Mammary epithelial cell (primary cell): ENCODE measurements at regions of chr6 and their contacts with region 1.

Region 1: DNA sequence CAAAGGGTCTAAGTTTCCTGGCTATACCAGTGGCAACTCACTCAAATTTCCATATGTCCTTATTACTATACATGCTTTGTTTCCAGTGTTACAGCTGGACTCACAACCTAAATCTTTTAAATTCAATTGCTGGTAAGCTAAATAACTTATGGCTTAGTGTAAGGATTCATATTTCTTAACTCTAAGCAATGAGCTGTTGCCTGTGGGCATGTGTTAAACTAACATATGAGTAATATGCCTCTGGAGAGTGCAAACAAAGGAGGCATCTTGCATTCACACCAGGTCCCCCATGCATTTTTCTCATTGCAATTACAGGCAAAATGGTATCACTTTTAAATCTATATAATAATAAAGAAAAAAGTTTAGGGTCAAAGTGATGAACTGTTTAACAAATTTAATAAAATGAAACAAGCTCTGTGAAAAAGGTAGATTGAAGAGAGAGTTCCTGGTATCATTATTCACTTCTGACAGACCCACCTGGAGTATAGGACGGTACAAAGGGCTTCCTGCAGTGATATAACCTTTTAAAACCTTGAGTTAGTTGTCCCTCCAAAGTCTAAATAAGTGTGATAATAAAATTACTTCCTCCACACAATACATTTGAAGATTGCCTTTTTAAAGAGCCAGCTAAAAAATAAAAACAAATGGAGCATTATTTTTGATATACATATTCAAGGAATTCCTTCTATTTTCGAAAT is 57.6 kb upstream of the HMGCLL1 start:
- DNase-seq: peak; percentile 75
- H3K4me3 ChIP-seq: no peak overlapping the region
- H3K27ac ChIP-seq: no peak overlapping the region
- H3K4me1 ChIP-seq: peaks cover 8% of the 10 kb centered on the region
- H3K27me3 ChIP-seq: no peaks in the 10 kb centered on the region
- CTCF ChIP-seq: no peak

Region 2: GRCh38 chr6:55293116-55293515 is 343.4 kb before region 1 on chr6:
- CTCF ChIA-PET with region 1: no interaction called
- dilution Hi-C with region 1: no loop called
- in situ Hi-C with region 1: no loop called
- intact Hi-C with region 1: no loop called
- DNase-seq: no peak
- H3K4me3 ChIP-seq: no peak overlapping the region
- H3K27ac ChIP-seq: no peak overlapping the region
- H3K4me1 ChIP-seq: no peaks in the 10 kb centered on the region
- H3K27me3 ChIP-seq: no peaks in the 10 kb centered on the region
- CTCF ChIP-seq: peak; percentile 36 to 56

Region 3: GRCh38 chr6:55405474-55406235 is 230.9 kb before region 1 on chr6:
- CTCF ChIA-PET with region 1: no interaction called
- dilution Hi-C with region 1: no loop called
- in situ Hi-C with region 1: no loop called
- intact Hi-C with region 1: no loop called
- DNase-seq: no peak
- H3K4me3 ChIP-seq: no peak overlapping the region
- H3K27ac ChIP-seq: no peak overlapping the region
- H3K4me1 ChIP-seq: no peaks in the 10 kb centered on the region
- H3K27me3 ChIP-seq: no peaks in the 10 kb centered on the region
- CTCF ChIP-seq: no peak

Region 4: DNA sequence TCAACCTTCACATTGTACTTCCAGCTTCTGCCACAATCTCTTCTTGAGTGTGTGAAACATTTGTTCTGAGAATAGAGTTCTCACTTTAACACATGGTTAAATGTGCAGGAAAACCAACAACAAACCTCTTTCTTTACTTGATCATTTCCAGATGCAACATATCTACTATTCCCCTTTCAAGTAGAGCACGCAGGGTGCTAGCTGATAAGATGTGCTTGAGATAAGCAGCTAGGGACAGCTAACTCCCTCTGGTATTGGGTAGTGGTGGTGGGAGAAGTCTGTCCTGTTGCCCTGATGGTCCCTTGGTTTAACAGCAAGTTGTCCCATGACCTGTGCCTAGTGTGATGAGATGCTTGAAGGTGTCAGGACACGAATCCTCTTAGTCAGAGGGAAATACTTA is 42.1 kb before region 1 on chr6:
- CTCF ChIA-PET with region 1: no interaction called
- dilution Hi-C with region 1: no loop called
- in situ Hi-C with region 1: no loop called
- intact Hi-C with region 1: no loop called
- DNase-seq: no peak
- H3K4me3 ChIP-seq: no peak overlapping the region
- H3K27ac ChIP-seq: no peak overlapping the region
- H3K4me1 ChIP-seq: no peaks in the 10 kb centered on the region
- H3K27me3 ChIP-seq: peaks cover 4% of the 10 kb centered on the region
- CTCF ChIP-seq: no peak

Region 5: DNA sequence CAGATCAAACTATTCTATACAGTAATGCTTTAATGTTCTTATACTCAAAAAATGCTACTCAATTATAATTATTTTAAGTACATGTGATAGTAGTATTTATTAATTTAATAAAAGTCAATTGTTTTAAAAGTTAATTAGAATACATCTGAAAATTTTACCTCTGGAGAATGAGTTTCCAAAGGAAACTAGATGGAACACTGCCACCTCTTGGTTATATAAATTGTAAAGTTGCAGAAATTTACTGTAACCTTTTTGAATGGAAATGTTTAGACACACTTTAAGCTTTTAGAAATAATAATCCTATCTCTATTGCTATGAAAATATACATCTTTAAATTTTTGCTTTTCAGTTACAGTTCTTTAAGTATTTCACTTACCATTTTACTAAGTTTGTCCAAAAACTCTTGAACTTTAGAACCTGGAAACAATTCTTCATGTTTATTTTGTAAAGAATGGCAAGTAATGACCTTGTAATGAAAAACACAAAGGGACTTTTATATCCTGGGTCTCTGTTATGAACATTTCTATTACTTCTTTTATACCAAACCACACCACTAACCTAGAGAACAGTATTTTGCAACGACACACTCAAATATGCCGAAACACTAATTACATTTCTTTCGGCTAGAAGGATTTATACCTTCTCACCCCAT is 249.8 kb after region 1 on chr6:
- CTCF ChIA-PET with region 1: no interaction called
- dilution Hi-C with region 1: no loop called
- in situ Hi-C with region 1: no loop called
- intact Hi-C with region 1: loop called (anchors 1 kb)
- DNase-seq: no peak
- H3K4me3 ChIP-seq: no peak overlapping the region
- H3K27ac ChIP-seq: no peak overlapping the region
- H3K4me1 ChIP-seq: peaks cover 8% of the 10 kb centered on the region
- H3K27me3 ChIP-seq: no peaks in the 10 kb centered on the region
- CTCF ChIP-seq: peak; percentile 27 to 42